ENCODE measurements at regions of chr1 and their contacts with region 1.

Region 1: GRCh38 chr1:226827968-226828513 is 42.4 kb upstream of the PSEN2 start:
- DNase-seq: peak; percentile 95 to 97 (median 96)
- ATAC-seq: peak; percentile 99
- H3K4me3 ChIP-seq: no peak overlapping the region
- H3K27ac ChIP-seq: peak overlapping the region in 2 of 4 donors; percentile 43 to 46
- H3K4me1 ChIP-seq: peaks cover 5% of the 10 kb centered on the region
- H3K27me3 ChIP-seq: no peaks in the 10 kb centered on the region
- CTCF ChIP-seq: peak; percentile 91 to 96 (median 94)
- POLR2A ChIP-seq: no peak

Region 2: DNA sequence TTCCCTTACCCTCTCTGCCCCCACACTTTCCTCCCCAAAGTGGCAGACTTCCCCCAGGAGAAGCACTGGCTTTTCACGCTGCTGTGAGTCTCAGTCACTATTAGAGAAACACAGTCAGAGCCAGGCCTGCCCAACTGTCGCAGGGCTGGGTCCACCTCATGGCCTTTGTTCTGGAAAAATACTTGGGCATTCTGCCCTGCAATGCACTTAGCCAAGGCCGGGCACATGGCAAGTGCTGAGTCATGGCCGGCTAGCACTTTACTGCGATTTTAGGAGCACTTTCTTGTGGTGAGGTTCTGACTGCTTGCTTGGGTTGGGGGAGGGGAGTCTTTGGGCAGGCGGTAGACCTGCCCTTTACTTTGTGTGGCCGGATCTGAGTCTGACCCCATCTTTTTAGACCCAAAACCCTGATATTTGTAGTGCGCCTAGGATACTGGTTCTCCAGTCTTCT is 1010.4 kb before region 1 on chr1:
- intact Hi-C with region 1: no loop called
- DNase-seq: peak; percentile 90 to 95 (median 94)
- ATAC-seq: peak; percentile 91
- H3K4me3 ChIP-seq: no peak overlapping the region
- H3K27ac ChIP-seq: peak overlapping the region; percentile 85 to 88 (median 87)
- H3K4me1 ChIP-seq: peaks cover 98% of the 10 kb centered on the region
- H3K27me3 ChIP-seq: no peaks in the 10 kb centered on the region
- CTCF ChIP-seq: peak in 1 of 7 experiments; percentile 5
- POLR2A ChIP-seq: peak in 2 of 3 donors; percentile 25 to 27

Region 3: GRCh38 chr1:226209307-226210059 is 618.6 kb before region 1 on chr1:
- intact Hi-C with region 1: no loop called
- DNase-seq: no peak
- ATAC-seq: no peak
- H3K4me3 ChIP-seq: no peak overlapping the region
- H3K27ac ChIP-seq: no peak overlapping the region
- H3K4me1 ChIP-seq: no peaks in the 10 kb centered on the region
- H3K27me3 ChIP-seq: no peaks in the 10 kb centered on the region
- CTCF ChIP-seq: no peak
- POLR2A ChIP-seq: no peak

Region 4: DNA sequence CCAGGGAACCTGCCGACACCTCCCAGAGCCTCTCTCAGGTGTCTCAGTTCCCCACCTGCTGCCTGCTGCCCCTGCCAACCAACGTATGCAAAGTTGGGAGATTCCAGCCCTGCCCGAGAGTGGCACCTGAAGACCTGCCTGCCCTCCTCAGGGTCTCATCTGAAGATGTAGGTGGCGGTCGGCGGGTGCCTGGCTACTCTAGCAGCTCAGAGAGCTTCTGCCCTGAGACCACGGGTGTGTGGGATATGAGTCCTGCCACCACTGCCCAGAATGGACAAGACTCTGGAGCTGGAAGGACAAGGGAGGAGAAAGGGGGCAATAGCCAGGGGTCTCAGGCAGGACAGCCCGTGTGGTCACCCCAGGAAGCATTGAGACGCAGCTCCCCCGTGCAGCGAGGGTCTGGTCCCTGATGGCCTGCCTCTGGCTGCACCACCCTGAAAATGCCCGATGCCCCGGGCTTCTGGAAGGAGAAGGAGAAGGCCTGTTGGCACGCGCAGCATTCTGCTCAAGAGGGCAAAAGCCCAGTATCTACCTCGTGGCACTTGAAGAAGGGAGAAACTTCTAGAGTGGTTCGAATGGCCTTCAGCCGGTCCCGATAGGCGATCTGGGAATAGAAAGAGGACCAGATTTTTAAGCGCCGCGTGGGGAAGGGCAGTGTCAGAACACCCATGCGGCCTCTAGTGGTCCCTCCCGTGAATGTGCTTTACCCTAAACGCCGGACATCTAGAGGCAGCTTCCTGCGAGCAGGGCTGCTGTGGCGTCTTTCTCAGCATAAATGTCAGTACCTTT is 190.7 kb before region 1 on chr1:
- intact Hi-C with region 1: loop called (anchors 5 kb)
- DNase-seq: no peak
- ATAC-seq: no peak
- H3K4me3 ChIP-seq: no peak overlapping the region
- H3K27ac ChIP-seq: peak overlapping the region in 1 of 4 donors; percentile 25
- H3K4me1 ChIP-seq: peaks cover 7% of the 10 kb centered on the region
- H3K27me3 ChIP-seq: no peaks in the 10 kb centered on the region
- CTCF ChIP-seq: no peak
- POLR2A ChIP-seq: no peak